Calu3 (cell line): ENCODE measurements at regions of chr19 and their contacts with region 1.

Region 1: DNA sequence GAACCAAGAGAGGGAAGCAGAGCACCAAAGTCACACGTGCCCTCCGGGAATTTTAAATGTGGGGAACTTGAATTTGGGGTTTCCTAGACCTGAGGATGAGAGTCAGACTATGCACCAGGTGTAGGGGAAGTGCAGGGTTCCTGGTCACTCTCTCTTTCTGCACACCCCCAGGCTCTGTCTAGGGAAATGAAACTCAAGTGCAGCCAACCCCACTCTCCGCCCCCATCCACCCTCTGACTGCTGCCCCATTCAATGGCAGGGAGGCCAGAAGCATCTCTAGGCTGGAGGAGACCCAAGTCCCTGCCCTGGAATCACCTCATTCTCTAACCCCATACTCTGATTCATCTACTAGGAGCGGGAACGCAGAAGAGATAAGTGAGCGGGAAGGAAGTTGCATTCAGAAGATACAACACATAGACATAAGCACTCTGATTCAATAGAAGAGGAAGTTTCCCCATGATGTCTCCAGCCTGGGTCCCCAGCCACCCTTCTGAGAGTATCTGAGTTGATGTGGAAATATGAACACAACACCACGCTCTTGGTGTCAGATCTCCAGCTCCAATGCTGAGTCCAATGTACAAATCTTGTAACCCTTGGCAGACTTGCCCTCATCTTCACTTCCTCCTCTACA is 4.7 kb upstream of the SIGLEC14 start:
- DNase-seq: no peak
- H3K4me3 Mint-ChIP-seq: no peak overlapping the region
- H3K27ac Mint-ChIP-seq: no peak overlapping the region
- H3K4me1 Mint-ChIP-seq: no peaks in the 10 kb centered on the region
- H3K27me3 Mint-ChIP-seq: peaks cover 73% of the 10 kb centered on the region
- CTCF ChIP-seq: no peak

Region 2: GRCh38 chr19:51552996-51553725 is 98.2 kb before region 1 on chr19:
- CTCF ChIA-PET with region 1: no interaction called
- intact Hi-C with region 1: loop called (anchors 10 kb)
- DNase-seq: peak; percentile 81
- H3K4me3 Mint-ChIP-seq: no peak overlapping the region
- H3K27ac Mint-ChIP-seq: no peak overlapping the region
- H3K4me1 Mint-ChIP-seq: peaks cover 7% of the 10 kb centered on the region
- H3K27me3 Mint-ChIP-seq: peaks cover 28% of the 10 kb centered on the region
- CTCF ChIP-seq: no peak

Region 3: DNA sequence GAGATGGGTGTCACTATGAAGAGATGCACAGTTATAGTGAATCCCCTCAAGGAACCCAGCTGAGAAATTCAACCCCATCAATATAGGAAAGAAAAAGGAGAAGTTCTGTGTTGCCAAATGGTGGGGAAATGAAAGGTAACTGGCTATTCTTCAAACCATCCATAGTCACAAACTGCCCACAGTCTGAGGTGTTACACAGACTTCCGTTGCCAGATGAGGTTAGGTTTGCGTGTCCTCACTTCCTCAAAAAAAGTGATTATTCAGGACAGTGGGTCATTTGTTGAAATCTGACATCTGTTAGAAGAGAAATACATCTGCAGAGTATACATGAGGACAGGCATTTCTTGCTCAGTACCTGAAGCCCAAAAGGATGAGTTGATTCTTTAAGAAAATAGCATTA is 30.2 kb before region 1 on chr19:
- CTCF ChIA-PET with region 1: no interaction called
- intact Hi-C with region 1: loop called (anchors 2 kb)
- DNase-seq: no peak
- H3K4me3 Mint-ChIP-seq: no peak overlapping the region
- H3K27ac Mint-ChIP-seq: no peak overlapping the region
- H3K4me1 Mint-ChIP-seq: no peaks in the 10 kb centered on the region
- H3K27me3 Mint-ChIP-seq: peaks cover 45% of the 10 kb centered on the region
- CTCF ChIP-seq: no peak

Region 4: DNA sequence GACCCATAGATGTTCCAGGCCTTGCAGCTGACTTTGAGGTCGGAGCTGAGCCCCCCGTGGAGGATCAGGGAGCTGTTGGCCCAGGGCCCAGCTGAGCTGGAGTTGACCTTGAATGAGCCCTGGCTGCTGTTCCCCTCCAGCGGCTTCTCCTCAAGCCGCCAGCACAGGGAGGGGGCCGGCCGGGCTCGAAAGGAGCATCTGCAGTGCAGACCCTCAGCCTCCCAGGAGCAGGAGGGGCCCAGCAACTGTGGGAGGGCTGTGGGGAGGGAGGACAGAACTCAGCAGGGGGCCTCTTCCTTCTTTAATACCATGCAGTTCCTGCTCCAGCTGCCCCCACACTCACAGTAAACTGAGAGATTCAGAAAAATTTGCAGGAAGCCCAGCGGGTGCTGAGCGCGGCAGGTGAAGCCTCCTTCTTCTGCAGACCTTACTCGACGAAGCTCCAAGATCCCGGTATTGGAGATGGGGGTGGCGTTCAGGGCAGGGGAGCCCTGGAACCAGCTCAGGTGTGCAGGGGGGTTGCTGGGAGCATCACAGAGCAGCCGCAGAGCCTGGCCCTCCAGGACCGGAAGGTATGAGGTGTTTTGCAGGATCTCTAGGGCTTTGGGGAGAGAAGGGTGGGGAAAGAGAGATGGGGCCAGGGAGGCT is 23.7 kb before region 1 on chr19:
- CTCF ChIA-PET with region 1: no interaction called
- intact Hi-C with region 1: loop called (anchors 2 kb)
- DNase-seq: no peak
- H3K4me3 Mint-ChIP-seq: no peak overlapping the region
- H3K27ac Mint-ChIP-seq: no peak overlapping the region
- H3K4me1 Mint-ChIP-seq: no peaks in the 10 kb centered on the region
- H3K27me3 Mint-ChIP-seq: peaks cover 70% of the 10 kb centered on the region
- CTCF ChIP-seq: no peak

Region 5: DNA sequence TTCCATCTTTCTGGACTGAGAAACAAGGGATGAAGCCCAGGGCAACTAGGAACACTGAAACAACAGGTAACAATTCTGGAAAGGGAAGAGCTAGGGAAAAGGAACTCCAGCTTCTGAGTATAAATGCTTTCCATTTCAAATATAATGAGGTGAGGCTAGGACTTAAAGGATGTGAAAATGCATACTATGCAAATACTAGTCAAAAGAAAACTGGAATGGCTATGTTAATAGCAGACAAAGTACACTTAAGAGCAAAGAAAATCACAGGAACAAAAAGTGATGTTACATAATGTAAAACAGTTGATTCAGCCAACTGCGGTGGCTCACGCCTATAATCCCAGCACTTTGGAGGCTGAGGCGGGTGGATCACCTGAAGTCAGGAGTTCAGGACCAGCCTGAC is 10.9 kb before region 1 on chr19:
- CTCF ChIA-PET with region 1: no interaction called
- intact Hi-C with region 1: no loop called
- DNase-seq: no peak
- H3K4me3 Mint-ChIP-seq: no peak overlapping the region
- H3K27ac Mint-ChIP-seq: no peak overlapping the region
- H3K4me1 Mint-ChIP-seq: no peaks in the 10 kb centered on the region
- H3K27me3 Mint-ChIP-seq: peaks cover 20% of the 10 kb centered on the region
- CTCF ChIP-seq: no peak